Ascending aorta (tissue), 2 donors: ENCODE measurements at regions of chr2 and their contacts with region 1.

Region 1: GRCh38 chr2:217836901-217837491 is 165.8 kb downstream of the TNS1 start:
- DNase-seq: peak in 1 of 2 donors; percentile 91
- H3K4me3 ChIP-seq: no peak overlapping the region
- H3K27ac ChIP-seq: peak overlapping the region; percentile 75 to 86
- H3K4me1 ChIP-seq: peaks cover 26 to 83% of the 10 kb centered on the region in 2 donors
- H3K27me3 ChIP-seq: no peaks in the 10 kb centered on the region
- CTCF ChIP-seq: peak in 1 of 3 experiments; percentile 15

Region 2: GRCh38 chr2:217816396-217816869 is 20.6 kb before region 1 on chr2:
- intact Hi-C with region 1: no loop called
- DNase-seq: no peak
- H3K4me3 ChIP-seq: no peak overlapping the region
- H3K27ac ChIP-seq: peak overlapping the region; percentile 44 to 45
- H3K4me1 ChIP-seq: peaks cover 10 to 26% of the 10 kb centered on the region in 2 donors
- H3K27me3 ChIP-seq: no peaks in the 10 kb centered on the region
- CTCF ChIP-seq: no peak

Region 3: GRCh38 chr2:217858519-217859491 is 21.8 kb after region 1 on chr2:
- intact Hi-C with region 1: loop called (anchors 2 kb)
- DNase-seq: peak; percentile 47 to 96
- H3K4me3 ChIP-seq: peak overlapping the region; percentile 48 to 49
- H3K27ac ChIP-seq: peak overlapping the region; percentile 87 to 89
- H3K4me1 ChIP-seq: peaks cover 68 to 94% of the 10 kb centered on the region in 2 donors
- H3K27me3 ChIP-seq: no peaks in the 10 kb centered on the region
- CTCF ChIP-seq: no peak

Region 4: GRCh38 chr2:217934321-217935131 is 97.5 kb after region 1 on chr2:
- intact Hi-C with region 1: loop called (anchors 5 kb)
- DNase-seq: peak; percentile 78 to 94
- H3K4me3 ChIP-seq: peak overlapping the region; percentile 64 to 81
- H3K27ac ChIP-seq: peak overlapping the region; percentile 98 to 100
- H3K4me1 ChIP-seq: peaks cover 46 to 86% of the 10 kb centered on the region in 2 donors
- H3K27me3 ChIP-seq: no peaks in the 10 kb centered on the region
- CTCF ChIP-seq: no peak